ENCODE measurements at regions of chr9 and their contacts with region 1.

Region 1: DNA sequence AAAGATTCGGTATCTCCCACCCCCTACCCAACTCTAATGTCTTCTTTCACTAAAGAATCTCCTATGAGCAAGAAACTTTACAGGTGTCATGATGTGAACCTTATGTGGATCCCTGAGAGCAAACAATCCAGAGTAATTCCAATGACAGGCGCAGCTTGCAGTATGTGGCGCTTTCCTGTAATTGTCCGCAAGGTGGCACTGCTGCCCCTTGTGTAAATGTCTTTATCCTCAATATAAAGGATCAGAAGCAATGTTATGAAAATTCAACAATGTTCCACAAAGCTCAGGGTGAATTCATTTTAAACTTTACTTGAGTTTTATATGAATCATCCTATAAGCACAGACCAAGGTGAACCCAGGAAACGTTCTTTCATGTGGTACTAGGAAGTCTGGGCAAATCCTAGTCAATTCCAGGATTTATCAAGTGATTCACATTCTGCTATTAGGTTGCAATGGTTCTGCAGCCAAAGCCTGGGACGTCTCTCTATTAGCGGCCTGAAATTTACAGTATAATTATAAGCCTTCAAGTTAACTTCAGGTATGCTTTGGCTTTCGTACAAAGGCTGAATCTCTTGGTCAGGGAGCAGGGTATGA is 113.7 kb downstream of the TRPM6 start:
- DNase-seq: peak; percentile 17 to 82 (median 62)
- ATAC-seq: peak; percentile 56 to 75 (median 64)
- H3K4me3 ChIP-seq: no peak overlapping the region
- H3K4me3 Mint-ChIP-seq: no peak overlapping the region
- H3K27ac ChIP-seq: no peak overlapping the region
- H3K27ac Mint-ChIP-seq: no peak overlapping the region
- H3K4me1 ChIP-seq: no peaks in the 10 kb centered on the region
- H3K4me1 Mint-ChIP-seq: no peaks in the 10 kb centered on the region
- H3K27me3 ChIP-seq: peaks cover 0 to 23% of the 10 kb centered on the region in 2 experiments
- H3K27me3 Mint-ChIP-seq: peaks cover 12 to 18% of the 10 kb centered on the region in 2 donors

Region 2: GRCh38 chr9:74496819-74497747 is 276.9 kb before region 1 on chr9 and contains the start of gene RORB:
- CTCF ChIA-PET with region 1: no interaction called
- POLR2A ChIA-PET with region 1: no interaction called
- DNase-seq: peak in 16 of 35 experiments; percentile 5 to 55 (median 25)
- ATAC-seq: peak; percentile 57 to 80 (median 72)
- H3K4me3 ChIP-seq: peak within 1 kb of the TSS; percentile 56 to 71
- H3K4me3 Mint-ChIP-seq: peak within 1 kb of the TSS; percentile 79 to 87 (median 84)
- H3K27ac ChIP-seq: no peak within 1 kb of the TSS
- H3K27ac Mint-ChIP-seq: peak within 1 kb of the TSS in 1 of 2 donors; percentile 68
- H3K4me1 ChIP-seq: peaks cover 9 to 42% of the 10 kb centered on the region in 2 experiments
- H3K4me1 Mint-ChIP-seq: peaks cover 25 to 37% (median 28%) of the 10 kb centered on the region in 3 donors
- H3K27me3 ChIP-seq: peaks cover 14 to 45% of the 10 kb centered on the region in 2 experiments
- H3K27me3 Mint-ChIP-seq: peaks cover 41 to 51% of the 10 kb centered on the region in 2 donors
- total RNA-seq, gene RORB: 0.03 TPM in 1 of 5 donors, not detected in the others

Region 3: DNA sequence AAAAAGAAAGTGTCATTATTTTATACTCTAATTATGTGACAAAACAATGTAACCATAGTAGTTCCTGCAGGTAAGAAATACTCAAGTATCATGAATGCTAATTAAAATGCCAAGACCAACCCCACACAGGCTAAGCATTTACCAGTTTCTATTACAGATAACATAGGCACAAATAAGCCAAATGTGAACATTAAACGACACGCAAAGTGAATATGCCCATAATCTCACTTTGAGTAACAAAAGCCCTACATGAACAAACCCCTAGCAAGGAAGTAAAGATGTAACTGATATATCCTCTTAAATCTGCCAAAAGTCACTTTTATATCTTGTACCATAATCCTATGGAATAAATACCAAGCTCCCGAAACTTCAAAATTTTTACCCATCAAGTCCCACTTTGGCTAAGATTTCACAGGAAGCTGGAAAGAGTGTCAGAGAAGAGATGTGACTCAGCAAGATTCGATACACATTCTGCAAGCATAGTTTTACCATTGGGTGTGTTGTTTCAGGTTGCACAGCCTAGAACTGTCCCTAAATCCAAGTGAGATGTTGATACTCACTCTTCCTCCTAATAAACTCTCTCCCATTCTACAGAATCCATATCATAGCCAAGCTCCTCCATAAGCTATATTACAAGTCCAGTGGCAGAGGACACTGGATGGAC is 84.9 kb after region 1 on chr9:
- CTCF ChIA-PET with region 1: no interaction called
- POLR2A ChIA-PET with region 1: no interaction called
- DNase-seq: no peak
- ATAC-seq: no peak
- H3K4me3 ChIP-seq: no peak overlapping the region
- H3K4me3 Mint-ChIP-seq: no peak overlapping the region
- H3K27ac ChIP-seq: no peak overlapping the region
- H3K27ac Mint-ChIP-seq: no peak overlapping the region
- H3K4me1 ChIP-seq: no peaks in the 10 kb centered on the region
- H3K4me1 Mint-ChIP-seq: peaks cover 1 to 6% (median 6%) of the 10 kb centered on the region in 3 donors
- H3K27me3 ChIP-seq: no peaks in the 10 kb centered on the region
- H3K27me3 Mint-ChIP-seq: peaks cover 0 to 6% of the 10 kb centered on the region in 2 donors

Region 4: DNA sequence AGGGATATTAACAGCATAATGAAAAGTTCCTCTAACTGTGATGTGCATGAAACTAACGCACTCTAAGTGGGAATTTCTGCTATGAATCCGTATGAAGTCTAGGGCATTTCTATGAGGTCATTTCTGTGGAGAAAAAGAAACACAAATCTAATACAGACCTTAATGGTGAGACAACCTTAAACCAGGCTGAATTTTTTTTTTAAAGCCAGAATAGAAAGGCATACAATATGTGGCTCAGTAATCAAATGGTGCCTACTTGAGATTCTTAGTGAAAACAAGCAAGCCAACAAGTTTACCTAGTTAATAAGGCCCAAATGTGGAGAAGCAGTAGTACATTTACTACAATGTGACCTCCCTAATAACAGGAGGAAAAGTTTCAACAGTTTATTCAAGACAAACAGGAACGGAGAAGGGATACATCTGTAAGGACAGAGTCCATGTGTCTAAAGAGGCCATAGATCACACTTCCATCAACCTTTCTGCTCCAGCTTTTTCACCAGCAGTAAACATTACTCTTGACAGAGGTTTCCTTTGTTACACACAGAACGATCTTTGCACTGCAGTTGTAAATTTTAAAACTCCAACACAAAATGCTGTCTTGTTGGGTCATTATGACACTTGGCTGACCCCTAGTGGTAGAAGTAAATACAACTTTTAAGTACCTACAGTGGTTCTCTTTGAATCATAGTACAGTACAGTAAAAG is 227.9 kb after region 1 on chr9:
- CTCF ChIA-PET with region 1: interaction called, 20 to 22 read pairs
- POLR2A ChIA-PET with region 1: interaction called in 1 of 2 experiments, 3 read pairs
- DNase-seq: peak in 7 of 35 experiments; percentile 4 to 89 (median 12)
- ATAC-seq: peak; percentile 76 to 91 (median 82)
- H3K4me3 ChIP-seq: no peak overlapping the region
- H3K4me3 Mint-ChIP-seq: no peak overlapping the region
- H3K27ac ChIP-seq: no peak overlapping the region
- H3K27ac Mint-ChIP-seq: no peak overlapping the region
- H3K4me1 ChIP-seq: no peaks in the 10 kb centered on the region
- H3K4me1 Mint-ChIP-seq: peaks cover 5 to 11% (median 5%) of the 10 kb centered on the region in 3 donors
- H3K27me3 ChIP-seq: no peaks in the 10 kb centered on the region
- H3K27me3 Mint-ChIP-seq: no peaks in the 10 kb centered on the region

Region 5: GRCh38 chr9:75071530-75072124 is 297.6 kb after region 1 on chr9:
- CTCF ChIA-PET with region 1: interaction called, 17 to 26 read pairs
- POLR2A ChIA-PET with region 1: interaction called in 1 of 2 experiments, 3 read pairs
- DNase-seq: peak in 34 of 35 experiments; percentile 12 to 63 (median 44)
- ATAC-seq: peak; percentile 93 to 97 (median 94)
- H3K4me3 ChIP-seq: no peak overlapping the region
- H3K4me3 Mint-ChIP-seq: no peak overlapping the region
- H3K27ac ChIP-seq: no peak overlapping the region
- H3K27ac Mint-ChIP-seq: peak overlapping the region; percentile 76 to 81
- H3K4me1 ChIP-seq: peaks cover 5 to 7% of the 10 kb centered on the region in 2 experiments
- H3K4me1 Mint-ChIP-seq: peaks cover 20 to 29% (median 23%) of the 10 kb centered on the region in 3 donors
- H3K27me3 ChIP-seq: no peaks in the 10 kb centered on the region
- H3K27me3 Mint-ChIP-seq: no peaks in the 10 kb centered on the region

Region 6: DNA sequence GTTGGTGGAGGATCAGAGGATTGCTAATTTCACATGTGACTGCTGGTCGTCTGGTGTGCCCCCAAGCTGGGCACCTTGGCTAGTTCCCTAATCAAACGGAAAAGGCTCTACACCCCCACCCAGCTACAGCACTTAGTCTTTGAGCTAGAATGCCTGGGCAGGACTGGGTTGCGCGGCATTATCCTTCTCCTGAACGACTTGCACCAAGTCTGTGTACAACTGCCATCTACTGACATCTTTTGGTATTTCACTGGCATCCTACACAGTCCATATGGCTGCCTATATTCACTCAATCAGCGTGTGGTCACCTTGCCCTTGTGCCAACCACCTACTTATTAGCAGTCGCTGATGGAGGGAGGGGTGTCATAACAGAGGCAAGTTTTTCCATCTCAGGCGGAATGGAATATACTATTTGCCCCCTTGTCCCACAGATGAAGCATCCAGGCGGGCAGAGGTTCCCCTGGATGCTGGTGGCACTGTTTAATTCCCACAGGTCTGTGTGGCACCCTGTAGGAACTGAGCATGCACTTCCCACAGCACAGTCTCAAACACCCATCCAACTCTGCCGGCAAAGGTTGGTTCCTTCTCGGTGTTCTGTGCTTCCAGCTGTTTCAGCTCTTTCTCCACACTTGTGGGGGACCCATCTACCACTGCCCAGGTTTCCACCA is 464.5 kb after region 1 on chr9:
- CTCF ChIA-PET with region 1: interaction called in 1 of 2 experiments, 12 read pairs
- POLR2A ChIA-PET with region 1: no interaction called
- DNase-seq: peak in 26 of 35 experiments; percentile 2 to 69 (median 22)
- ATAC-seq: peak; percentile 70 to 87 (median 78)
- H3K4me3 ChIP-seq: no peak overlapping the region
- H3K4me3 Mint-ChIP-seq: no peak overlapping the region
- H3K27ac ChIP-seq: no peak overlapping the region
- H3K27ac Mint-ChIP-seq: no peak overlapping the region
- H3K4me1 ChIP-seq: peaks cover 0 to 2% of the 10 kb centered on the region in 2 experiments
- H3K4me1 Mint-ChIP-seq: no peaks in the 10 kb centered on the region
- H3K27me3 ChIP-seq: no peaks in the 10 kb centered on the region
- H3K27me3 Mint-ChIP-seq: no peaks in the 10 kb centered on the region

Region 7: DNA sequence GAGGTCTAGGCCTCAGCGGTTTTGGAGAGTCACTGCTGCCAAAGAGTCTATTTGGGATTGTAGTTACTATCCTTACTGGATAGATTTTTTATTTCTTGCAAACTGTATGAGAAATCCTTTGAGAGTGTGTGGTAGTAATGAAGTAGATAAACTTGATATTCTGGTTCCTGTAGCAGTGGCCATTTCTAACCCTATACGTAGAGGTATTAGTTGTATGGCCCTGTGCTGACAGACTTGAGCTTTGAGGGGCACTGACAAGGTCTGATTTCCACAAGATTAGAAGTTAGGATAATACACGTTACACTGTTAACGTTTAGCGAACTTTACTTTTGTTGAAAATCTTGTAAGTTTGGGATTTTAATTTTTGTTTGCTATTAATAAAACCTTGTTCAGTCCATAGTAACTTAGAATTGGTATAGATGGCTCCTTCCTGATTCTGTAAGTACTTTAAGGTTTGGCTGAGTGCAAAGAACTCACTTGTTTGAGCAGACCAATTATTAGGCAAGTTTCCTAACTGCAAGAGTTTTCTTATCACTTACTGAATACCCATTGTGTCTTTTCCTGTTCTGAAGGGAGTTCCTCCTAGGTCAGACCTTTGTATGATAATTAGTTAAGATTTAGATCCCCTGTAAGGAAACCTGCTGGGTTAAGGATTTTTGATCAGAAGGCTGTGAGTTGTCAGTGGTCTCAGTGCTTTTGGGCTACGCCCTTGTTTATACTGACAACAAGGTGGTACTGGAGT is 1716.4 kb after region 1 on chr9:
- CTCF ChIA-PET with region 1: no interaction called
- POLR2A ChIA-PET with region 1: no interaction called
- DNase-seq: no peak
- ATAC-seq: no peak
- H3K4me3 ChIP-seq: no peak overlapping the region
- H3K4me3 Mint-ChIP-seq: no peak overlapping the region
- H3K27ac ChIP-seq: no peak overlapping the region
- H3K27ac Mint-ChIP-seq: no peak overlapping the region
- H3K4me1 ChIP-seq: peaks cover 0 to 4% of the 10 kb centered on the region in 2 experiments
- H3K4me1 Mint-ChIP-seq: peaks cover 9 to 25% (median 9%) of the 10 kb centered on the region in 3 donors
- H3K27me3 ChIP-seq: no peaks in the 10 kb centered on the region
- H3K27me3 Mint-ChIP-seq: no peaks in the 10 kb centered on the region

Measured in T-cell (primary cell).